AG04450 (cell line): ENCODE measurements at regions of chr13 and their contacts with region 1.

Region 1: DNA sequence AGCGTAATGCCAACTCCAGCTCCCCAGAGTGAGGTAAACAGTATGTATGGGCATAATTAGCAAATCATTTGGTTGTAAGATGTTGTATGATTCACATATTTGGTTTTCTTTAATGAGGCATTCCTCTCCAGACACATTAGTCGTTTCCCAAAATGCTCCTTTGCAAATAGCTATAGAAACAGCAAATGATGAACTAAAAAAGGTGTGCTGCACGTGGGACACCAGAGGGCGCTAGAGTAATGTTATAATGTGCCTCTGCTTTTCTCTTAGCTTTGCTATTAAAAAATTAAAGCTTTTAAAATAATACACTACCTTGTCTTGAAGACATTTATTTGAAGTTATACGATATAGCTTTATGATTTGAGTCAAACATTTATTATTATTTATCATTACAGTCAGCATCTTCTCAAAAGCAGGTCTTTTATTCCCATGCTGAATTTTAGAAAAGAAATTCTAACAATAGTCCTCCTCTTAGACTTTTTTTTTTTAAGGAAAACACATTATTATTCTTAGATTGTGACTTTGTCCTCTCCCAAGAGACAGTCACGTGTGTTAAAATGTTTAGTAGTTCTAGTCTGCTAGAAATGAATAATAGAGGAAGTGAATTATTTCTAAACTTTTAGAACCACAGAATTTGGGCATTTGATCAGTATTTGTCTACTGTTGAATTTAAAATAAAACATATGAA is 121.6 kb upstream of the FRY start:
- DNase-seq: peak; percentile 42
- H3K4me3 ChIP-seq: no peak overlapping the region
- H3K27ac ChIP-seq: no peak overlapping the region
- H3K27me3 ChIP-seq: peaks cover 8% of the 10 kb centered on the region
- CTCF ChIP-seq: peak; percentile 85

Region 2: GRCh38 chr13:31870511-31870910 is 39.5 kb before region 1 on chr13:
- CTCF ChIA-PET with region 1: no interaction called
- POLR2A ChIA-PET with region 1: no interaction called
- DNase-seq: no peak
- H3K4me3 ChIP-seq: no peak overlapping the region
- H3K27ac ChIP-seq: no peak overlapping the region
- H3K27me3 ChIP-seq: no peaks in the 10 kb centered on the region
- CTCF ChIP-seq: no peak

Region 3: GRCh38 chr13:31930901-31931522 is 21.0 kb after region 1 on chr13:
- CTCF ChIA-PET with region 1: interaction called, 16 read pairs
- POLR2A ChIA-PET with region 1: interaction called, 3 read pairs
- DNase-seq: no peak
- H3K4me3 ChIP-seq: no peak overlapping the region
- H3K27ac ChIP-seq: no peak overlapping the region
- H3K27me3 ChIP-seq: no peaks in the 10 kb centered on the region
- CTCF ChIP-seq: no peak

Region 4: DNA sequence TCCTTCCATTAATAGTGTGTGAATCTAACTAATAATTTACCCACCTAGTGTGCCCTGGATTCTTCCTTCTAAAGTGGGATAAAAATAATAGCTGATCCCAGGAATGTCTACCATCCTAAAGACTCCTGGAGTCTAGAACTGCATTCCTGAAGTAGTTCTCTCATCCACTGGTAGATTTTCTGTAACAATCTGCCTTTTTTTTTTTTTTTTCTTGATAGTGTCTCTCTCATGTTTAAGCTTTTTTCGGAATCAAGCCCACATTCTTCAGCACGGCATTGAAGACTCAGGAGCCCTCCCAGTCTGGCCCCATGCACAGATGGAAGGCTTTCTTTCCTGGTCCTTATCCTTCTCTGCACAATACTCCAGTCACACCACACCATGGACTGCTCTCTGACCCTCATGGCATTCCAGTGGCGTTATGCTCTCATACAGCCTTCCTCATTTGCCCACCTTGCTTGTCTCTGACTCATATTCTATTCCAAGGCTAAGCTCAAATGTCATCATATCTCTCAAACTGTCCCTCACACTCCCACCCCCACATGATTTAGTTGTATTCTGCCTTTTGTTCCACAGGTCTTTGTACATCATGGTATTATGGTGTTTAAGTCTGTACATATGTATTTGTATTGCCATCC is 52.8 kb after region 1 on chr13:
- CTCF ChIA-PET with region 1: interaction called, 17 read pairs
- POLR2A ChIA-PET with region 1: no interaction called
- DNase-seq: no peak
- H3K4me3 ChIP-seq: no peak overlapping the region
- H3K27ac ChIP-seq: no peak overlapping the region
- H3K27me3 ChIP-seq: no peaks in the 10 kb centered on the region
- CTCF ChIP-seq: no peak

Region 5: GRCh38 chr13:32031025-32031814 is 121.2 kb after region 1 on chr13 and contains the start of gene FRY:
- CTCF ChIA-PET with region 1: interaction called, 23 read pairs
- POLR2A ChIA-PET with region 1: no interaction called
- DNase-seq: no peak
- H3K4me3 ChIP-seq: peak within 1 kb of the TSS; percentile 77
- H3K27ac ChIP-seq: peak within 1 kb of the TSS; percentile 62
- H3K27me3 ChIP-seq: no peaks in the 10 kb centered on the region
- CTCF ChIP-seq: peak; percentile 20; the same call in 1 of the 2 replicates
- polyA plus RNA-seq, gene FRY: 24.6 and 37.8 TPM in 2 replicates

Region 6: GRCh38 chr13:32234932-32235331 is 324.9 kb after region 1 on chr13:
- CTCF ChIA-PET with region 1: interaction called, 10 read pairs
- POLR2A ChIA-PET with region 1: no interaction called
- DNase-seq: no peak
- H3K4me3 ChIP-seq: no peak overlapping the region
- H3K27ac ChIP-seq: no peak overlapping the region
- H3K27me3 ChIP-seq: no peaks in the 10 kb centered on the region
- CTCF ChIP-seq: no peak

Region 7: DNA sequence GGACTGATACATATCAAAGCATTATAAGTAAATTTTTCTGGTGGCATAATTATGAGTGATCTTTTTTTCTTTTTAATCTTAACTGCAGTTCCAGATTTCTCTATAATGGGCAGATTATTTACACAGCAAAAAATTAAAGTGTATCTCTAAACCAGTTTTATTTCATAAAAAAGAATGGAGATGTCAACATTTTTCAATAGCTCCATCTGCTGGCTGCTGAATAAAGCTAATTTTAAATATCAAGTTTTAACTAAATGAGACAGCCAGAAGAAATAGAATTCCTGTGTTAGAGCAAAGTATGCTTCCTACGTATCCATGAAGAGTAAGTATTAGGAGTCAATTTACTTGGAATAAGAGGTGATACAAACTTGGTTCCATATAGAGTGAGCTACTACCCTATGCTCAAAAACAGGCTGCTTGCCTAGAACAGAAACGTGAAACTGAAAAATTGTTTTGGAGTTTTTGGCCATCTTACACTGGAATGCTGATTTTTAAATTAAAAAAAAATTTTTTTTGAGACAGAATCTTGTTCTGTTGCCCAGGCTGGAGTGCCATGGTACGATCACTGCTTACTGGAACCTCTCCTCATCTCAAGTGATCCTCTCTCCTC is 671.3 kb after region 1 on chr13:
- CTCF ChIA-PET with region 1: interaction called, 65 read pairs
- POLR2A ChIA-PET with region 1: interaction called, 3 read pairs
- DNase-seq: no peak
- H3K4me3 ChIP-seq: no peak overlapping the region
- H3K27ac ChIP-seq: no peak overlapping the region
- H3K27me3 ChIP-seq: no peaks in the 10 kb centered on the region
- CTCF ChIP-seq: peak; percentile 57